ENCODE measurements at regions of chrX and their contacts with region 1.

Region 1: GRCh38 chrX:46185922-46186790 is 359.1 kb downstream of the ZNF674 start:
- DNase-seq: no peak
- ATAC-seq: no peak
- H3K4me3 ChIP-seq: no peak overlapping the region
- H3K4me3 Mint-ChIP-seq: no peak overlapping the region
- H3K27ac ChIP-seq: no peak overlapping the region
- H3K27ac Mint-ChIP-seq: no peak overlapping the region
- H3K4me1 ChIP-seq: no peaks in the 10 kb centered on the region
- H3K4me1 Mint-ChIP-seq: no peaks in the 10 kb centered on the region
- H3K27me3 ChIP-seq: no peaks in the 10 kb centered on the region
- H3K27me3 Mint-ChIP-seq: peaks cover under 1% of the 10 kb centered on the region
- CTCF ChIP-seq: no peak

Region 2: DNA sequence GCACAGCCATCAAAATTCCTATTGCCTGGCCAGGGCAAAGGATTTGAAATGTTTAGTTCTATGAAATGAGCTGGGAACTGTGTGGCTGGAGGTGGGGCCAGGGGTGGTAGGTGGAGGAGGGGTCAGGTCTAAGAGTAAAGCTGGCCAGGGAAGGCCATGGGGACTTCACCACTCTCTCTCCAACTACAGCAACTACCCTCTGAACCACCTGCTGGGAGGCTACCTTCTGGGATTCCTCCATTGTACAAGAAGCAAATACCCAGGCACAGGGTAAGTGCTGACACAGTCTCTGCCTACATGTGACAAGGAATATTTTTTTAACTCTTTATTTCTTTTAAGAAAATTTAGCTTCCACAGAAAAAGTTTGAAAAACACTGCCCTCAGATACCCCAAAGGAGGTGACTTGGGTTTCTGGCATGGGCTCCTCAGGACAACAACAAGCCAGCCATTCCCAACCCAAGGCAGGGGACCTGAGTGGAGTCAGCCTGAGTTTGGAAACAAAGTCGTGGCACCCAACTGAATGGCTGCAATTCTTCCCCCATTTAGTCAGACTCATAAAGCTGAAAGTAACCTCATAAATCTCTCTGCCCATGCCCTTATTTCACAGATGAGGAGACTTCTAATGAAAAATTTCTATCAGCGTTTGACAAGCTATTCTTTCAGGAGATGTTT is 391.7 kb before region 1 on chrX:
- CTCF ChIA-PET with region 1: no interaction called
- POLR2A ChIA-PET with region 1: no interaction called
- intact Hi-C with region 1: loop called in 1 of 2 experiments (anchors 5 kb)
- DNase-seq: no peak
- ATAC-seq: no peak
- H3K4me3 ChIP-seq: no peak overlapping the region
- H3K4me3 Mint-ChIP-seq: no peak overlapping the region
- H3K27ac ChIP-seq: no peak overlapping the region
- H3K27ac Mint-ChIP-seq: no peak overlapping the region
- H3K4me1 ChIP-seq: no peaks in the 10 kb centered on the region
- H3K4me1 Mint-ChIP-seq: peaks cover 13% of the 10 kb centered on the region
- H3K27me3 ChIP-seq: no peaks in the 10 kb centered on the region
- H3K27me3 Mint-ChIP-seq: no peaks in the 10 kb centered on the region
- CTCF ChIP-seq: no peak